Activated T-helper 1 cell treated with anti-CD3 and anti-CD28 coated beads, Interleukin-12 subunit alpha, Interleukin-12 subunit beta, Interleukin-2, Interleukin-4 antibody, amounts not matched to agents 30 ng/mL and 10 ng/mL and 1 ng/mL, durations not matched to agents 14 hours and 24 hours and 36 hours (primary cell): ENCODE measurements at regions of chr11 and their contacts with region 1.

Region 1: DNA sequence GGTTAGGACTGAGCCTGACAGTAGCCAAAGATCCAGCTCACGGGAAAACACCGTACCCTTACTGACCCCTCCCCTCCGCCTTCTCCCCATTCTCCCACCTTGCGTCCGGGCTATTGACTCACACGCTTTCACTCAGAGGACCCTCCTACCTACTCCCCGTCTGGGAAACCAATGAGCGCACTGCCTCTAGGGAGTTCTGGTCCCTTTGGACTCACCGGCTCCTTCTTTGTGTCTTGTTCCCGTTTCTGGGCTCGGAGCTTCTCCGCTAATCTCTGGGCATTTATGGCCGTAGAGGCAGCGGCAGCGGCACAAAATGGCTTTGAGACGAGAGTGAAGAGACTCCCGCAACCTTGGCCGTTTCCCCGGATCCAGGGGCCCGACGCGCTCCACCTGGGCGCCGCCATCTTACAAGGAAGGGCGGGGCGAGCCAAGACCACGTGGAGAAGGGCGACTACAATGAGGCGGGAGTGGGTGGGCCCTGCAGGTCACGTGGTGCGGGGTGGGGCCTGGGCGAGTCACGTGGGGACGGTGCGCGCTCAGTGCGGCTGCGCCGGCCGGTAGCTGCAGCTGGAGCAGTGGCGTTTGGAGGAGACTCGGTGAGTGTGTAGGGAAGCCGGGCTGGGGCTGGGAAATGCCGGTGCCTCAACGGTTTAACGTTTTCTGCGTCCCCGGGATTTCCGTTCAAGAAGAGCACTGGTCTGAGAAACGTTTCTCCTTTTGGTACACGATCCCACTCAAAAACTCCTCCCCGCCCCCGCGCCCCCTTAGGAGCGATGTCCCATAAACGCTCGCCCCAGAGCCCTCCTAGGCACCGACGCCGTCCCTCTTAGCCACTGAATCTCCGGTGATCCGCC is at the starts of genes FAM118B and RPUSD4:
- DNase-seq: peak; percentile 98
- H3K4me3 Mint-ChIP-seq: peak within 1 kb of the TSS; percentile 99
- H3K27ac Mint-ChIP-seq: peak within 1 kb of the TSS; percentile 98
- H3K4me1 Mint-ChIP-seq: peaks cover 34% of the 10 kb centered on the region
- H3K27me3 Mint-ChIP-seq: no peaks in the 10 kb centered on the region
- total RNA-seq, gene FAM118B: 13.2 and 16.4 TPM in 2 replicates
- total RNA-seq, gene RPUSD4: 49.2 and 49.8 TPM in 2 replicates

Region 2: GRCh38 chr11:125592305-125593112 is 619.0 kb before region 1 on chr11 and contains the start of gene STT3A:
- intact Hi-C with region 1: loop called (anchors 1 kb)
- DNase-seq: peak; percentile 98
- H3K4me3 Mint-ChIP-seq: peak within 1 kb of the TSS; percentile 98
- H3K27ac Mint-ChIP-seq: peak within 1 kb of the TSS; percentile 94
- H3K4me1 Mint-ChIP-seq: peaks cover 50% of the 10 kb centered on the region
- H3K27me3 Mint-ChIP-seq: no peaks in the 10 kb centered on the region
- total RNA-seq, gene STT3A: 164 and 171 TPM in 2 replicates

Region 3: GRCh38 chr11:125923012-125923579 is 288.4 kb before region 1 on chr11:
- intact Hi-C with region 1: loop called (anchors 1 kb)
- DNase-seq: peak; percentile 37
- H3K4me3 Mint-ChIP-seq: no peak overlapping the region
- H3K27ac Mint-ChIP-seq: no peak overlapping the region
- H3K4me1 Mint-ChIP-seq: no peaks in the 10 kb centered on the region
- H3K27me3 Mint-ChIP-seq: peaks cover 21% of the 10 kb centered on the region

Region 4: GRCh38 chr11:126282736-126283591 is 71.5 kb after region 1 on chr11 and contains the start of gene TIRAP:
- intact Hi-C with region 1: loop called (anchors 1 kb)
- DNase-seq: peak; percentile 53
- H3K4me3 Mint-ChIP-seq: peak within 1 kb of the TSS; percentile 98
- H3K27ac Mint-ChIP-seq: peak within 1 kb of the TSS; percentile 98
- H3K4me1 Mint-ChIP-seq: peaks cover 45% of the 10 kb centered on the region
- H3K27me3 Mint-ChIP-seq: no peaks in the 10 kb centered on the region
- total RNA-seq, gene TIRAP: 13.0 and 15.0 TPM in 2 replicates

Region 5: GRCh38 chr11:126319374-126319740 is 107.9 kb after region 1 on chr11:
- intact Hi-C with region 1: no loop called
- DNase-seq: no peak
- H3K4me3 Mint-ChIP-seq: no peak overlapping the region
- H3K27ac Mint-ChIP-seq: peak overlapping the region; percentile 29
- H3K4me1 Mint-ChIP-seq: peaks cover 40% of the 10 kb centered on the region
- H3K27me3 Mint-ChIP-seq: no peaks in the 10 kb centered on the region

Region 6: GRCh38 chr11:126355324-126355925 is 144.0 kb after region 1 on chr11 and contains the start of gene ST3GAL4:
- intact Hi-C with region 1: loop called (anchors 1 kb)
- DNase-seq: peak; percentile 64
- H3K4me3 Mint-ChIP-seq: peak within 1 kb of the TSS; percentile 95
- H3K27ac Mint-ChIP-seq: peak within 1 kb of the TSS; percentile 92
- H3K4me1 Mint-ChIP-seq: peaks cover 36% of the 10 kb centered on the region
- H3K27me3 Mint-ChIP-seq: no peaks in the 10 kb centered on the region
- total RNA-seq, gene ST3GAL4: 13.2 and 14.1 TPM in 2 replicates

Region 7: DNA sequence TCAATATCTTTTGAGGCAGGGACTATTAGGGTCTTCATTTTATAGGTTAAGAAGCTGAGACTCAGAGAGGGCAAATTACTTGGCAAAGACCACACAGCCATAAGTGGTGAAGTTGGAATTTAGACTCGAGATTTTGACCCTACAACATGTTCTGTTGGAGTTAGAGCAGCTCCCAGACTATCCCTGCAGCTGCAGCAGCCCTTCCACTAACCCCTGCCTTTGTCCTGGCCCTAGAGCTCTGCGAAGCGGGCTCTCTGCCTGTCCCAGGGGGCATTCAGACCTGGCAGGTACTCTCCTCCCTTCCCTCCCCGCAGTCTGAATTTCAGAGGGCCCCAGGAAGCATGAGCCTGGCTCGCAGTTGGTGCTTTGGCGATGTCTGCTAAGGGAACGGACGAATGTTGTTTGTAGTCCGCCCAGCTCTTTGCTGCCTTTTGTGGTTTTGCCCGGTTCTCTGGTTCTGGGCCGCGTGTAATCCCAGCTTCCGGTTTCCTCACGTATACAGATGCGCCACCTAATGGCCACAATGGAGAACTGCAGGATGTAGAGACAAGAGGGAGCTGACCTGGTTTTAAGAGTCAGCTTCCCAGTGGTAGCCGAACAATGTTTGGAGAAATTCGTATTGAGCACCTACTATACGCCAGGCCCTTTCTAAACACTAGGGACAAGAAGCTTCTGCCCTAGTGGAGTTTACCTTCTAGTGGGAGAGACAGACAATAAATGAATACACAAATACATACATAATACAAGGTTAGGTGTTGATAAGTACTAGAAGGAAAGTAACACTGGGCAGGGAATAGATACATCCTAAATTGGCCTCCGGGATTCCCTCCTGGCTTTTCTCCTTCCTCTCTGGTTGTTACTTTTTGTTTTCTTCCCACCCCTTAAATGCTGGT is 269.2 kb after region 1 on chr11:
- intact Hi-C with region 1: loop called (anchors 1 kb)
- DNase-seq: peak; percentile 66
- H3K4me3 Mint-ChIP-seq: peak overlapping the region; percentile 23
- H3K27ac Mint-ChIP-seq: peak overlapping the region; percentile 87
- H3K4me1 Mint-ChIP-seq: peaks cover 33% of the 10 kb centered on the region
- H3K27me3 Mint-ChIP-seq: peaks cover 3% of the 10 kb centered on the region